Heart right ventricle (tissue), 16 donors: ENCODE measurements at regions of chr6 and their contacts with region 1.

Region 1: DNA sequence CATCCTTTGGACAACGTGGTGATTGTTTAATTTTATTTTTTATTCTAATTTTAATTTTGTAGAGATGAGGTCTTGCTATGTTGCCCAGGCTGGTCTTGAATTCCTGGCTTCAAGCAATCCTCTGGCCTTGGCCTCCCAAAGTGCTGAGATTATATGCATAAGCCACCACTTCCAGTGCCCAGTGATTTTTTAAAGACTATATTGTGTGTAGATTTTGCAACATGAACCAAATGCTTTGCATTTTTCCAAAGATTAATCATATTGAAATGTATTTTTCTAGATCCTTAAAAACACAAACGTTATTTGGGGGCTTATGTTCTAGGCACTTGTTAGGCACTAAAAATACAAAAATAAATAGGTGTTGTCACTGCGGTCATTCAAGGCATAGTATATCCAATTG is 117.6 kb upstream of the CCN2 start:
- DNase-seq: no peak
- ATAC-seq: no peak
- H3K4me3 ChIP-seq: no peak overlapping the region
- H3K27ac ChIP-seq: no peak overlapping the region
- H3K4me1 ChIP-seq: peaks cover 0 to 4% (median 0%) of the 10 kb centered on the region in 9 donors
- H3K27me3 ChIP-seq: no peaks in the 10 kb centered on the region
- CTCF ChIP-seq: no peak

Region 2: DNA sequence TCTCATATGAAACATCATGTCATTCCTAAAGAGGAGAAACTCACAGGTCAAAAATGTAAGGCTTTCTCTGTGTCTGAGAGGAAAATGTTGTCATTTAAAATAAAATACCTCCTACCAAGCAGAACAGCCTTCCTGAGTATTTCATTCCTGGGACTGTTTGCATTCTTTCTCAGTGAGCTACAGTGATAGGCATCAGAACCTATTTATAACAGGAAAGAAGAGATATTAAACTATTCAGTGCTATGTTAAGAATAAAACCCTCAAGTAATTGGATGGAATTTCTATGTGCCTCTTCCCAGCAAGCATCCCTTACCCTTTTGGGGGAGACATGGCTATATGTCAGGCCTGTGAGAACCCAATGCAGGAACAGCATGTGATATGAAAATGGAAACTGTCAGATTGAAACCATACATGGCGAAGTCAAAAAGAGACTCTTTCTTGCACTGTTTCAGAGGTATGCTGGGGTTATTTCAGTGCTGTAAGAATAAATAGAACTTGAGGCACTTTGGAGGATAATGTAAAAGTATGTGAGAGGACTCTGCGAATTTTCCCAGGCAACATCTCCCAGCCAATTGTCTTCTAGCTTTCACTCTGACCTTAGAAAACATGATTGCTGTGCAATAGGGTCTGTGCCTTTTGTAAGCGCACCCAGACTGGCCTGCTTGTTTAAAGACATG is 16.2 kb after region 1 on chr6:
- intact Hi-C with region 1: loop called in 1 of 10 experiments (anchors 2 kb)
- DNase-seq: no peak
- ATAC-seq: peak in 6 of 8 donors; percentile 38 to 70 (median 55)
- H3K4me3 ChIP-seq: no peak overlapping the region
- H3K27ac ChIP-seq: peak overlapping the region in 8 of 10 donors; percentile 0 to 78 (median 60)
- H3K4me1 ChIP-seq: peaks cover 0 to 22% (median 10%) of the 10 kb centered on the region in 9 donors
- H3K27me3 ChIP-seq: no peaks in the 10 kb centered on the region
- CTCF ChIP-seq: no peak

Region 3: DNA sequence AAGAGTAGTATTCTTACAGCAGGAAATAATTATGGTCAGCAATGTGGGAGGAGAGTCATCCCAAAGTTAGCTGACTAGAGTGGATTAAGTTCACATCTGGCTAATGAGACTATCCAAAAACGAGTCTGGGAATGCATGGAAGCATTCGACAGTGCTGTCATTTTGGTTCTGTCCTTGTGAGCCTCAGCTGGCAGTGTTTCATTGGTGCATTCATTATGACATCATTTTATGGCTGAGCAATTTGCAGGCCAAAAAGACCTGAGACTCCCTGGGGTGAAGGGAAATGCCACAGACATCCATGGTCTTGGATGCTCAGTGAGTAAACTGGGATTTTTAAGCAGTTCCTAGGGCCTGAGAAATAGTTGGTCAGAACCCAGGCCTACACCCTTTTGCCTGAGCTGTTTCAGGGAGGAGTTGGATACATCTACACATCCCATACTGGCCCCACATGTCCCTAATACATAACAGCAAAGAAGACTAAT is 78.8 kb after region 1 on chr6:
- intact Hi-C with region 1: no loop called
- DNase-seq: peak in 1 of 2 donors; percentile 14
- ATAC-seq: peak in 7 of 8 donors; percentile 58 to 92 (median 76)
- H3K4me3 ChIP-seq: no peak overlapping the region
- H3K27ac ChIP-seq: peak overlapping the region in 6 of 10 donors; percentile 36 to 70 (median 43)
- H3K4me1 ChIP-seq: peaks cover 0 to 14% (median 0%) of the 10 kb centered on the region in 9 donors
- H3K27me3 ChIP-seq: no peaks in the 10 kb centered on the region
- CTCF ChIP-seq: no peak